PC-9 (cell line): ENCODE measurements at regions of chr3 and their contacts with region 1.

Region 1: GRCh38 chr3:188683032-188683521 is 488.7 kb upstream of the TPRG1 start:
- DNase-seq: peak; percentile 39 to 64
- H3K4me3 ChIP-seq: no peak overlapping the region
- H3K27ac ChIP-seq: peak overlapping the region; percentile 11; the same call in 1 of the 2 replicates
- H3K4me1 ChIP-seq: peaks cover 38% of the 10 kb centered on the region
- H3K27me3 ChIP-seq: no peaks in the 10 kb centered on the region
- CTCF ChIP-seq: no peak

Region 2: GRCh38 chr3:188061133-188061532 is 621.9 kb before region 1 on chr3:
- CTCF ChIA-PET with region 1: no interaction called
- POLR2A ChIA-PET with region 1: no interaction called
- intact Hi-C with region 1: loop called (anchors 5 kb)
- DNase-seq: peak; percentile 92 to 99
- H3K4me3 ChIP-seq: no peak overlapping the region
- H3K27ac ChIP-seq: peak overlapping the region; percentile 46
- H3K4me1 ChIP-seq: peaks cover 36% of the 10 kb centered on the region
- H3K27me3 ChIP-seq: no peaks in the 10 kb centered on the region
- CTCF ChIP-seq: no peak

Region 3: GRCh38 chr3:188205992-188206416 is 477.1 kb before region 1 on chr3:
- CTCF ChIA-PET with region 1: interaction called, 11 read pairs
- POLR2A ChIA-PET with region 1: no interaction called
- intact Hi-C with region 1: no loop called
- DNase-seq: no peak
- H3K4me3 ChIP-seq: no peak overlapping the region
- H3K27ac ChIP-seq: no peak overlapping the region
- H3K4me1 ChIP-seq: no peaks in the 10 kb centered on the region
- H3K27me3 ChIP-seq: no peaks in the 10 kb centered on the region
- CTCF ChIP-seq: peak; percentile 58

Region 4: GRCh38 chr3:188631291-188632010 is 51.6 kb before region 1 on chr3:
- CTCF ChIA-PET with region 1: no interaction called
- POLR2A ChIA-PET with region 1: interaction called, 4 read pairs
- intact Hi-C with region 1: loop called (anchors 2 kb)
- DNase-seq: peak in 1 of 2 experiments; percentile 41
- H3K4me3 ChIP-seq: no peak overlapping the region
- H3K27ac ChIP-seq: no peak overlapping the region
- H3K4me1 ChIP-seq: peaks cover 41% of the 10 kb centered on the region
- H3K27me3 ChIP-seq: no peaks in the 10 kb centered on the region
- CTCF ChIP-seq: no peak

Region 5: GRCh38 chr3:188697127-188697526 is 14.1 kb after region 1 on chr3:
- CTCF ChIA-PET with region 1: no interaction called
- POLR2A ChIA-PET with region 1: no interaction called
- intact Hi-C with region 1: no loop called
- DNase-seq: no peak
- H3K4me3 ChIP-seq: no peak overlapping the region
- H3K27ac ChIP-seq: no peak overlapping the region
- H3K4me1 ChIP-seq: no peaks in the 10 kb centered on the region
- H3K27me3 ChIP-seq: no peaks in the 10 kb centered on the region
- CTCF ChIP-seq: no peak

Region 6: DNA sequence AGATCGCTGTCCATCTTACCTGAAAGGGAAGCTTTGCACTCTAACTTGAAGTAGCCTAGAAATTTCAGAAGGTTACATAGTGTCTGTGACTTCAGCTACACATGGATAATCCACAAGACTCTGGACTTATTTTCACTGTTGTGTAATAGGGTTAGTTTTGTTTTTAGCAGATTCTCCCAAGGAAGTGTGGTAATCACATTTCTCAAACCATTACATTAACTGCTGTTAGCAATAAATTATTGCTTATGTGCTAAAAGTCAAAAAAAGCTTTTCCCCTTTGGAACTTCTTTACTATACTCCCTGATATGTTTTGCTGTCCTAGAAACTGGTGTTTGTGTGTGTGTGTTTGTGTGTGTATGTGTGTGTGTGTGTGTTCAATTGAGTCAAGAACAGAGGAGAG is 136.9 kb after region 1 on chr3:
- CTCF ChIA-PET with region 1: no interaction called
- POLR2A ChIA-PET with region 1: no interaction called
- intact Hi-C with region 1: loop called (anchors 1 kb)
- DNase-seq: no peak
- H3K4me3 ChIP-seq: no peak overlapping the region
- H3K27ac ChIP-seq: no peak overlapping the region
- H3K4me1 ChIP-seq: peaks cover 33% of the 10 kb centered on the region
- H3K27me3 ChIP-seq: no peaks in the 10 kb centered on the region
- CTCF ChIP-seq: no peak

Region 7: DNA sequence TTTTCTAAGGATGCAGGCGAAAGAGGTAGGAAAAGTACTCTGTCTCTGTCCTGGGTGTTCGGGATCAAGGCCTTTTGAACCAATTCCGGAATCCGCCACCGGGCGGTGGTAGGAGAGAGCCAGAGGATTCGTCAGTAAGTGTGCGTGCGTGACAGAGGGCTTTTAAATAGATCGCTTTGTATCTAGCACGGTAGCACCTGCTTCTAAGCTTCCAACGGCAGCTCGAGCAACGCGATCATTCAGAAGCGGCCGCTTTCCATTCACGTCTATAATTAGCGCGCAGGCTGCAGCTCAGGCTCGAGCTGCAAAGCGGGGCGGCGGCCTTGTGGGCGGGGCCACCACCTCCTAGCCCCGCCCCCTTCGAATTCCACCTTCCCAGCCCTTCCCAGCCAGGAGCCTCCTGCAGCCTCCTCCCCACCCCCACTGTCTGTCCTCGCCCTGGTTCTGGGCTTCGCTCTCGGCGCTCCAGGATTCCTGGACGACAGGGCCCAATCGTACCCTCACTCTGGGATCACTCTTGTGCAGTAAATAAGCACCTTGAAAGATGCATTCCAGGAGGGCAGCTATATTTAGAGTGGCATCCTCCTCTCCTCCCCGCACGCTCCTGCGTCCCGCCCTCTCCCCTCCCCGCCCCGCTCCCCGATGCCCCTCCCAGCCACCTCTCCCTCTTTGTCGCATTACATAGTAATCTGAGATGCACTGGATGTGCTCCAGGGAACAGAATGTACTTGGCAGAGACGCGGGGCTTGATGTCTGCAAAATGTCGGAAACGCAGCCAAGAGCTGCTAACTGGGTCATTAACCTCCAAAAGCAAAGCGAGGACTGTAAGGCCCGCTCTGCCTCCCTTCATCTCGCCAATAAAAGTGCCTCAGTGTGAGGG is 264.6 kb after region 1 on chr3:
- CTCF ChIA-PET with region 1: no interaction called
- POLR2A ChIA-PET with region 1: interaction called, 9 read pairs
- intact Hi-C with region 1: loop called (anchors 2 kb)
- DNase-seq: peak; percentile 88 to 95
- H3K4me3 ChIP-seq: peak overlapping the region; percentile 57
- H3K27ac ChIP-seq: peak overlapping the region; percentile 7; the same call in 1 of the 2 replicates
- H3K4me1 ChIP-seq: peaks cover 39% of the 10 kb centered on the region
- H3K27me3 ChIP-seq: no peaks in the 10 kb centered on the region
- CTCF ChIP-seq: peak; percentile 66

Region 8: GRCh38 chr3:189233225-189233858 is 550.3 kb after region 1 on chr3:
- CTCF ChIA-PET with region 1: no interaction called
- POLR2A ChIA-PET with region 1: no interaction called
- intact Hi-C with region 1: loop called (anchors 5 kb)
- DNase-seq: peak; percentile 54 to 74
- H3K4me3 ChIP-seq: no peak overlapping the region
- H3K27ac ChIP-seq: no peak overlapping the region
- H3K4me1 ChIP-seq: 0 out of 2 replicates have a peak, but pooled peaks cover 7% of the 10 kb centered on the region
- H3K27me3 ChIP-seq: no peaks in the 10 kb centered on the region
- CTCF ChIP-seq: peak; percentile 89